Prostate gland (tissue), 2 donors: ENCODE measurements at regions of chr12 and their contacts with region 1.

Region 1: GRCh38 chr12:25250744-25251730 is at the start of gene KRAS:
- DNase-seq: peak; percentile 97
- H3K4me3 ChIP-seq: peak within 1 kb of the TSS; percentile 73 to 100
- H3K27ac ChIP-seq: peak within 1 kb of the TSS; percentile 90 to 94
- H3K4me1 ChIP-seq: no peaks in the 10 kb centered on the region
- H3K27me3 ChIP-seq: no peaks in the 10 kb centered on the region
- CTCF ChIP-seq: peak in 2 of 4 experiments; percentile 3 to 13
- POLR2A ChIP-seq: peak; percentile 84
- total RNA-seq, gene KRAS: 12.1 to 19.1 TPM

Region 2: DNA sequence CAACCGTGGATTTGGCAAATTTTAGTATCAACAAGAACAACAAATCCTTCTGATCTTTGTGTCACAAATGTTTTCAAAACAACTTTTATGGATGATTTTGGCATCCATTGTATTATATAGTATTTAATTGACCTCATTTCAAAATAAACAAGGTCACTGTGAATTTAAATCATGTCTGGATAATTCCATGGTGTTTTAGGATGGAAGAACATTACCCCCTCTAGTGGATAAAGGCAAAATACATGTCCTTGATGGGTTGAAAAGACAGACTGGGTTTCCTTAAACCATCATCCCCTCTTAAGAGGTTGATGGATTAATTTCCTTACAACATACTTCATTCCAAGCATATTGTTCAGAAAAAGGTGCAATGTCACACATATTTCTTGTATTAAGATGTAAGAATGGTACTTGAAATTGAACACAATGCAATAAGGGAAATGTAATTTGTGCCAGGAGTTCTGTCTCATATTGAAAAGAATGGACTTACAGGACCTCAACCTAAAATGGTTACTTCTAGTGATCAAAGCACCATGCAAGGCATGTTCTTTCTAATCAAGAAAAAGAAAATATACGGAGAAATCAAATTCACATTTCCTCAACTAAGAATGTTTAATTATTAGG is 654.2 kb before region 1 on chr12:
- intact Hi-C with region 1: no loop called
- DNase-seq: no peak
- H3K4me3 ChIP-seq: no peak overlapping the region
- H3K27ac ChIP-seq: no peak overlapping the region
- H3K4me1 ChIP-seq: no peaks in the 10 kb centered on the region
- H3K27me3 ChIP-seq: no peaks in the 10 kb centered on the region
- CTCF ChIP-seq: peak; percentile 42 to 66 (median 58)
- POLR2A ChIP-seq: no peak

Region 3: GRCh38 chr12:25195056-25195971 is 55.7 kb before region 1 on chr12 and contains the starts of genes DNAI7 and ETFRF1:
- intact Hi-C with region 1: loop called (anchors 10 kb)
- DNase-seq: peak; percentile 97
- H3K4me3 ChIP-seq: peak within 1 kb of the TSS; percentile 60 to 69
- H3K27ac ChIP-seq: peak within 1 kb of the TSS; percentile 85 to 90
- H3K4me1 ChIP-seq: peaks cover 7% of the 10 kb centered on the region
- H3K27me3 ChIP-seq: no peaks in the 10 kb centered on the region
- CTCF ChIP-seq: no peak
- POLR2A ChIP-seq: peak; percentile 77
- total RNA-seq, gene DNAI7: 1.5 to 3.8 TPM
- total RNA-seq, gene ETFRF1: 23.1 to 39.3 TPM

Region 4: DNA sequence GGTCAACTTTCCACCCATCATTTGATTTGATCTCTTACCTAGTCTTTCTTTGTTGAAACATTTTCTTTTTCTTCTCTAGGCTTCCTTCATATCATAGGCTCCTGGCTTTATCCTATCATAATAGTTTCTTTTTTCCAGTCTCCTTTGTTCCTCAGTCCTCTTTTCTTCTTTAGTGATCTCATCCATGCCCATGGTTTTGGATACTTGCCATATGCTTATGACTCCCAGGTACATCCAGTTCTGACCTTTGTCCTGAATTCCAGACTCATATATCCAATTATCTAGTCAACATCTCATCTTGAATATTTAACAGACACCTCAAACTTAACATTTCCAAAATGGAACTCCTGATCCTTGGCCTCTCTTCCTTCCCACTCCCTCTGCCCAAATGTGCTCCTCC is 35.8 kb after region 1 on chr12:
- intact Hi-C with region 1: no loop called
- DNase-seq: no peak
- H3K4me3 ChIP-seq: no peak overlapping the region
- H3K27ac ChIP-seq: no peak overlapping the region
- H3K4me1 ChIP-seq: no peaks in the 10 kb centered on the region
- H3K27me3 ChIP-seq: no peaks in the 10 kb centered on the region
- CTCF ChIP-seq: no peak
- POLR2A ChIP-seq: no peak

Region 5: GRCh38 chr12:25332143-25332542 is 81.1 kb after region 1 on chr12:
- intact Hi-C with region 1: loop called (anchors 5 kb)
- DNase-seq: no peak
- H3K4me3 ChIP-seq: no peak overlapping the region
- H3K27ac ChIP-seq: no peak overlapping the region
- H3K4me1 ChIP-seq: no peaks in the 10 kb centered on the region
- H3K27me3 ChIP-seq: no peaks in the 10 kb centered on the region
- CTCF ChIP-seq: no peak
- POLR2A ChIP-seq: no peak

Region 6: GRCh38 chr12:25764892-25765291 is 513.9 kb after region 1 on chr12:
- intact Hi-C with region 1: no loop called
- DNase-seq: no peak
- H3K4me3 ChIP-seq: no peak overlapping the region
- H3K27ac ChIP-seq: no peak overlapping the region
- H3K4me1 ChIP-seq: no peaks in the 10 kb centered on the region
- H3K27me3 ChIP-seq: no peaks in the 10 kb centered on the region
- CTCF ChIP-seq: no peak
- POLR2A ChIP-seq: no peak